Caco-2 (cell line): ENCODE measurements at regions of chr1 and their contacts with region 1.

Region 1: DNA sequence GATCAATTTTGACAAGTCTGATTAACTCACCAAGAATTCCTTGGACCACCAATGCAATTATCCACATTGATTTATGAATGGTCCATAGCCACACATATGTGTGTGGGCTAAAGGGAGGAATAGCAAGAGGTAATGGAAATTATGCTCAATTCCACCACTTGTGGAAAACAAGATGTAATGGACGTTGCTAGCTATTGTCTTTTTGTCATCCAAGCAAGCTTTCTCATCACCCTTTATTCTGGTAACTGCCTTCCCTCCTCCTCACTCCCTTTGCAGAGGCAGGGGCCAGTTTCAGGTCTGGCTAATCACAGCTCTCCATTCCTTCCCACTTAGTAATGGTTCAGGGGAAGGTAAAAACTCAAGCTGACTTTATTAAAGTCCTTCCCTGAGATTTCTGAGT is 24.7 kb upstream of the RAB3GAP2 start:
- DNase-seq: no peak
- H3K4me3 ChIP-seq: no peak overlapping the region
- H3K4me3 Mint-ChIP-seq: no peak overlapping the region
- H3K27ac Mint-ChIP-seq: no peak overlapping the region
- H3K4me1 ChIP-seq: peaks cover 4% of the 10 kb centered on the region; the same call in 1 of the 2 replicates
- H3K4me1 Mint-ChIP-seq: peaks cover 5% of the 10 kb centered on the region
- H3K27me3 ChIP-seq: no peaks in the 10 kb centered on the region
- H3K27me3 Mint-ChIP-seq: peaks cover 4% of the 10 kb centered on the region
- CTCF ChIP-seq: no peak

Region 2: GRCh38 chr1:219959540-219960203 is 337.3 kb before region 1 on chr1:
- CTCF ChIA-PET with region 1: no interaction called
- POLR2A ChIA-PET with region 1: no interaction called
- intact Hi-C with region 1: no loop called
- DNase-seq: no peak
- H3K4me3 ChIP-seq: no peak overlapping the region
- H3K4me3 Mint-ChIP-seq: no peak overlapping the region
- H3K27ac Mint-ChIP-seq: no peak overlapping the region
- H3K4me1 ChIP-seq: peaks cover 12% of the 10 kb centered on the region
- H3K4me1 Mint-ChIP-seq: peaks cover 7% of the 10 kb centered on the region
- H3K27me3 ChIP-seq: no peaks in the 10 kb centered on the region
- H3K27me3 Mint-ChIP-seq: no peaks in the 10 kb centered on the region
- CTCF ChIP-seq: no peak

Region 3: DNA sequence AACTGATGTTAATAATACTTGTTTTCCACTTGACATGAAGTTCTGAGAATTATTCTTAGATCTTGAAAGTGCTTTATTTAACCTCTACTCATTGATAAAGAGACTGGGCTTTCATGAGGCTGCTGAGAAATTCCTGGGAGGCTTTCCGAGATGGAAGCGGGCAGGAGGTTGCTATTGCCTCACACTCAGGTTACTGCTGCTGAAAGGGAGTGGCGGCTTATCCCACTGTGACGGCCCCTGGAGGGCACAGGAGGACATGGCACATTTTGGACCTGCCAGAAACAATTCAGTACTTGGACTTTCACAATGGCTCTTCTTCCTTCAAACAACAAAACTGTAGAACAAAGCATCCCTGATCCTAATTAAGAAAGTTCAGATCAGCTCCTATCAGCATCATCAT is 214.8 kb after region 1 on chr1:
- CTCF ChIA-PET with region 1: interaction called, 3 read pairs
- POLR2A ChIA-PET with region 1: no interaction called
- intact Hi-C with region 1: loop called (anchors 1 kb)
- DNase-seq: peak; percentile 45 to 52
- H3K4me3 ChIP-seq: no peak overlapping the region
- H3K4me3 Mint-ChIP-seq: no peak overlapping the region
- H3K27ac Mint-ChIP-seq: no peak overlapping the region
- H3K4me1 ChIP-seq: no peaks in the 10 kb centered on the region
- H3K4me1 Mint-ChIP-seq: no peaks in the 10 kb centered on the region
- H3K27me3 ChIP-seq: no peaks in the 10 kb centered on the region
- H3K27me3 Mint-ChIP-seq: peaks cover 6% of the 10 kb centered on the region
- CTCF ChIP-seq: peak; percentile 30 to 57

Region 4: DNA sequence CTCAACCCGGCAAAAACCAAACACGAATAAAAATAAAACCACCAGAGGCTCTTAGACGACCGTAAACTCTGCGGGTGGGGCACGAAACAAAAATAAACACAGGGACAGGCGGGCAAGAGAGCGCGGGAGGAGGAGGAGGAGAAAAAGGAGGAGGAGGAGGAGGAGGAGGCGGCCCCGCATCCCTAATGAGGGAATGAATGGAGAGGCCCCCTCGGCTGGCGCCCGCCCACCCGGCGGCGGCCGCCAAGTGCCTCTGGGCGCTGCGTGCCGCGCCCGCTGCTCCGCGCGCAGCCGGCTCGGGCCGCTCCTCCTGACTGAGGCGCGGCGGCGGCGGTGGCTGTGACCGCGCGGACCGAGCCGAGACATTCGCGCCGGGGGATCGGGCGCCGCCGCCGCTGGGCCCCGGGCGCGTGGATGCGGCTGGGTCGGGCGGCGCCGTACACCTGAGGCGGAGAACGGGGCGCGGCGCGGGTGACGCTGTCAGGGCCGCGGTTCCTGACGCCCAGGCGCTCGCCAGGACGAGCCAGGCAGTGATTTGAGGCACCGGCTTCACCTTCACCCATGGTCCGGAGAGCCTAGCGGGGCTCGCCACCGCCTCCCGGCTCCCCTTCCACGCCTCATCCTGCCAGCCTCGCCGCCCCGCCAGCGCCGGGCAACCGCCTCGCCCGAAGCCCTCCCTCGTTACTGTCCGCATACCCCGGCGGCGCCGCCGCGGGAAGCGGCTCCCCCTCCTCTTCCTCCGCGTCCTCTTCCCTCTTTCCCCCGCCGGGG is 231.1 kb after region 1 on chr1 and contains the start of gene MARK1:
- CTCF ChIA-PET with region 1: no interaction called
- POLR2A ChIA-PET with region 1: no interaction called
- intact Hi-C with region 1: loop called (anchors 1 kb)
- DNase-seq: peak in 1 of 2 experiments; percentile 43
- H3K4me3 ChIP-seq: peak within 1 kb of the TSS; percentile 55
- H3K4me3 Mint-ChIP-seq: peak within 1 kb of the TSS; percentile 86
- H3K27ac Mint-ChIP-seq: peak within 1 kb of the TSS; percentile 34
- H3K4me1 ChIP-seq: no peaks in the 10 kb centered on the region
- H3K4me1 Mint-ChIP-seq: peaks cover 8% of the 10 kb centered on the region
- H3K27me3 ChIP-seq: peaks cover 10% of the 10 kb centered on the region
- H3K27me3 Mint-ChIP-seq: peaks cover 40% of the 10 kb centered on the region
- CTCF ChIP-seq: no peak
- total RNA-seq, gene MARK1: 0.05 and 0.14 TPM in 2 replicates